Activated naive CD4-positive, alpha-beta T cell treated with anti-CD3 and anti-CD28 coated beads for 36 hours (primary cell): ENCODE measurements at regions of chr19 and their contacts with region 1.

Region 1: DNA sequence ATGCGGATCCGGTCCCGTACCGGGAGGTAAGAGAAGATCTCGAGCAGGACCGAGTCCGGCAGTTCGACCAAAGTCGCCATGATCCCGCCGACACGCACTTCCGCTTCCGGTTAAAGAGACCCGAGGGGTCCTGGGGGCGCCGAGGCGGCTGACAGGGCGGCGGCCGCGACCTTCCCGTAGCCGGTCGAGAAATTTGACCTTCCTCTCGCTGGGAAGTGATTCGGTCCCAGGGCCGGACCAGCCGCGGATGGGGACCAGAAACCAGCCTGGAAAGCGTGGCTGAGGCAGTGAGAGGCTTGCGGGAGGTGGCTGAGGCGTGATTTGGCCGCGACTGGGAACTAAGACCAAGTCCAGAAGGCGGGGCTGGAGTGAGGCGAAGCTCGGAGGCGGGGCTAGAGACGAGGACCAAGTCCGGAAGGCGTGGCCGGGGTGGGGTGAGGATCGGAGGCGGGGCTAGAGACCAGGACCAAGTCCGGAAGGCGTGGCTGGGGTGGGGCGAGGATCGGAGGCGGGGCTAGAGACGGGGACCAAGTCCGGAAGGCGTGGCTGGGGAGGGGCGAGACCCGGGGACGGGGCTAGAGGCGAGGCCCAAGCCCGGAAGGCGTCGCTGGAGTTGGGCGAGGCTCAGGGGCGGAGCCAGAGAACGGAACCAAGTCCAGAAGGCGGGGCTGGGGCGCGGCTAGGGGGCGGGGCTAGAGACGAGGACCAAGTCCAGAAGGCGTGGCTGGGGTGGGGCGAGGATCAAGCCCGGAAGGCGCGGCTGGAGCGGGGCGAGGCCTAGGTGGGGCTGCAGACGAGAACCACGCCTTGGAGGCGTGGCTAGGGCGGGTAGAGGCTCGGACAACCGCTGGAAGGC is at the start of gene FBXL12:
- DNase-seq: peak; percentile 100
- H3K4me3 Mint-ChIP-seq: peak within 1 kb of the TSS; percentile 82
- H3K27ac Mint-ChIP-seq: peak within 1 kb of the TSS; percentile 86
- H3K4me1 Mint-ChIP-seq: peaks cover 31% of the 10 kb centered on the region
- H3K27me3 Mint-ChIP-seq: no peaks in the 10 kb centered on the region
- total RNA-seq, gene FBXL12: 17.5 to 19.8 TPM

Region 2: GRCh38 chr19:9700229-9700981 is 118.6 kb before region 1 on chr19:
- CTCF ChIA-PET with region 1: no interaction called
- intact Hi-C with region 1: no loop called
- DNase-seq: no peak
- H3K4me3 Mint-ChIP-seq: no peak overlapping the region
- H3K27ac Mint-ChIP-seq: no peak overlapping the region
- H3K4me1 Mint-ChIP-seq: no peaks in the 10 kb centered on the region
- H3K27me3 Mint-ChIP-seq: no peaks in the 10 kb centered on the region

Region 3: DNA sequence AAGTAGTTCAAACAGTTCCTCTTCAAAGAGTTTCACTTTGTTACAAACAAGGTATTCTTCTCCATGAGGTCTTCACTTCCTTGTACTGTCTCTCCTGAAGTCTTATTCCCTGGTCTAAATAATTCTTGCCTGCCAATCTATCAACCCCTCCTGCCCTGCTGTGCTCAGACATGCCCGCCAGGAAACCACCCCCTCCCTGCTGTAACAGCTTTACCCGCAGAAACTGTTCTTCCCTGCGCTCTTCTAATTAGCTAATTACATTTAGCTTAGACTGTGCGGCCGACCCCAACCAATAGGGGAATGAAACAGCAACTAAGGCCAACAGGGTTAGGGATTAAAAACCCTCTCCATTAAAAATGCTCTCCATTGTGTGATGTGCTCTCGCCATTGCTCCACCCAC is 97.1 kb before region 1 on chr19:
- CTCF ChIA-PET with region 1: no interaction called
- intact Hi-C with region 1: no loop called
- DNase-seq: peak; percentile 5
- H3K4me3 Mint-ChIP-seq: no peak overlapping the region
- H3K27ac Mint-ChIP-seq: no peak overlapping the region
- H3K4me1 Mint-ChIP-seq: peaks cover 2% of the 10 kb centered on the region
- H3K27me3 Mint-ChIP-seq: peaks cover 4% of the 10 kb centered on the region

Region 4: DNA sequence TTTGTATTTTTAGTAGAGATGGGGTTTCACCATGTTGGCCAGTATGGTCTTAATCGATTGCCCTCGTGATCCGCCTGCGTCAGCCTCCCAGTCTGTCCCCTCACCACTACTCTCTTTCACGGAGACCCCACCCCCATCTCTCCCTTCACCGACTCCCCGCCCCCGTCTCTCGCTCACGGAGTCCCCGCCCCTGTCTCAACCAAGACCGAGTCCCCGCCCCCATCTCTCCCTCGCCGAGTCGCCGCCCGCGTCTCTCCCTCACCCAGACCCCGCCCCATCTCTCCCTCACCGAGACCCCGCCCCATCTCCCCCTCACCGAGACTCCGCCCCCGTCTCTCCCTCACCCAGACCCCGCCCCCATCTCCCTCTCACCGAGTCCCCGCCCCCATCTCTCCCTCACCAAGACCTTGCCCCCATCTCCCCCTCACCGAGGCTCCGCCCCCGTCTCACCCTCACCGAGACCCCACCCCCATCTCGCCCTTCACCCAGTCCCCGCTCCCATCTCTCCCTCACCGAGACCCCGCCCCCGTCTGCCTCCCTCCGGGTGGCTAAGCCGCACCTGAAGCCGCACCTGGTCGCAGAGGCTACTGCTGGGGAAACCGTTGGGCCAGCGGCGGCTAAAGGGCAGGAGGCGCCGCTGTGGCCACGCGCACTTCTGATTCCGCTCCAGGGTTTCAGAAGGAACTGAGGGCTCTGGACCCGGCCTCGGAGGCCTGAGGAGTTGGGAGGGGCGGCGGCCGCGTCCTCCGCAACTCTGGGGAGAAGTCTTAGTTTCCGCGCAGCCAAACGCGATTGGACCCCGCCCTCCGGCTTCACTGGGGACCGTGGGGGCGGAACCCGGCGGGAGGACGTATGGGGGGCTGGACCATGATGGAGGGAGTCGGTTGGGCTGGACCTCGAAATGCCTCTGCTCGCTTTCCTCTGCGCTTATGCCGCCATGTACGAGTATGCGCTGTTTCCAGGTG is 33.3 kb before region 1 on chr19:
- CTCF ChIA-PET with region 1: no interaction called
- intact Hi-C with region 1: loop called (anchors 1 kb)
- DNase-seq: peak; percentile 100
- H3K4me3 Mint-ChIP-seq: peak overlapping the region; percentile 93
- H3K27ac Mint-ChIP-seq: peak overlapping the region; percentile 94
- H3K4me1 Mint-ChIP-seq: peaks cover 25% of the 10 kb centered on the region
- H3K27me3 Mint-ChIP-seq: no peaks in the 10 kb centered on the region

Region 5: GRCh38 chr19:9834726-9835506 is 16.0 kb after region 1 on chr19 and contains the start of gene PIN1:
- CTCF ChIA-PET with region 1: no interaction called
- intact Hi-C with region 1: loop called (anchors 1 kb)
- DNase-seq: peak; percentile 99
- H3K4me3 Mint-ChIP-seq: peak within 1 kb of the TSS; percentile 84
- H3K27ac Mint-ChIP-seq: peak within 1 kb of the TSS; percentile 85
- H3K4me1 Mint-ChIP-seq: peaks cover 27% of the 10 kb centered on the region
- H3K27me3 Mint-ChIP-seq: no peaks in the 10 kb centered on the region
- total RNA-seq, gene PIN1: 84.5 to 88.1 TPM

Region 6: DNA sequence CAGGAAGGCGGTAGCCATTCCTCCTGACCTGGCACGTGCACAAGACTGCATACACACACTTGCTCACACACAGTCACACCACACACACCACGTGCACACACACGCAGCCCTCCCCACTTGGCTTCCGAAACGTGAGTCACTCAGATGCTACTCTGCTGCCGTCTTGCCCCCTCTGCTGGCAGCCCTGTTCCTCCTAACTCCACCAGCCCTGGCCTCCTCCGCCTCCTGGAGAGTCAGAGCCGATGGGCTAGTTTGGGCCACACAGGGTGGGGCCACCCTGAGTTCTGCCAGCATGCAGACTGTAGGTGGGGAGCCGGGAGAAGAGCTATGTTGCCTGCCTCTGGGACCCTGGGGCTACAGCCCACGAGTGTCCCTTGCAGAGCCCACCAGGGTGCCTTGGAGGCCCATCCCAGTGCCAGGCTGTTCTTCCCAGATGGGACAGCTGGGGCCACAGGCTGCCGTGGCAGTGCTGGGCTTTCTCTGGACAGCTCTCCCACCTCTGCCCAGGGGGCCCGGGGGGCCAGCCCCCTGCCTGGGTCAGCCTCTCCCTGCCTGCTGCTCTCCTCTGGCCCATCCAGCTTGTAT is 28.2 kb after region 1 on chr19:
- CTCF ChIA-PET with region 1: no interaction called
- intact Hi-C with region 1: no loop called
- DNase-seq: peak; percentile 60
- H3K4me3 Mint-ChIP-seq: no peak overlapping the region
- H3K27ac Mint-ChIP-seq: no peak overlapping the region
- H3K4me1 Mint-ChIP-seq: peaks cover 15% of the 10 kb centered on the region
- H3K27me3 Mint-ChIP-seq: no peaks in the 10 kb centered on the region

Region 7: DNA sequence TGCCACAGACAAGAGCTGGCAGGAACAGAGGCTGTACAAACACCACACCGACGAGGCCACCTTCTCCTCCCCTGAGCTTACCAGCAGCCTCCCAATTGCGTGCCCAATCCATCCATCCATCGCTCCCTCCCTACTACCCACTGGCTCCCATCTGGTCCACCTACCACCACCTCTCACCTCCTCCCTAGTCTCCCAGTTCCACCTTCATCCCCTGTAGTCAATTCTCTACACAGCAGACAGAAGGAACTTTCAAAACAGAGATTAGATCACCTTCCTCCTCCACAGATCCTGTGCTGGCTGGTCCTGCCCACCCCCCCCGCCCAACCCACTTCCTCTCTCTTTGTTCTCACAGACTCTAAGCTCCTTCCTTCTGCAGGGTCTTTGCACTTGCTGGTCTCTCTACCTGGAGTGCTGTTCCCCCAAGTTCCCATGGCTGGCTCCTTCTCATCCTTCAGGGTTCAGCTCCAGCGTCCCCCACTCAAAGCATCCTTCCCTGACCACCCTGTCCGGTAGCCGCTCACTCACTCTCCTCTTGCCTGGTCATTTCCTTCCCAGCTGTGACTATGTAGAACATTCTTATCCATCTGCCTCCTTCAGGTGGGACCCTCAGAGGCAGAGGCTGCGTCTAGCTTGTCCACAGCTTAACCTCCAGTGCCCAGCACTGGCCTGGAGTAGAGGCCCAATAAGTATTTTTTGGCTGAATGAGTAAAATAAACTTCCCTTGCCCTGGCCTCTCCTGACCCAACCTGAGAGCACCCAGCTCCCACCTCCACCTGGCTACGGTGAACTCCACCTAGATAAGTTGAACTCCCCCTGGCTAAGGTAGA is 39.2 kb after region 1 on chr19:
- CTCF ChIA-PET with region 1: no interaction called
- intact Hi-C with region 1: loop called (anchors 2 kb)
- DNase-seq: peak; percentile 32
- H3K4me3 Mint-ChIP-seq: peak overlapping the region; percentile 53
- H3K27ac Mint-ChIP-seq: peak overlapping the region; percentile 91
- H3K4me1 Mint-ChIP-seq: peaks cover 67% of the 10 kb centered on the region
- H3K27me3 Mint-ChIP-seq: no peaks in the 10 kb centered on the region